Ascending aorta (tissue), 2 donors: ENCODE measurements at regions of chr1 and their contacts with region 1.

Region 1: GRCh38 chr1:245153081-245153551 is 1.7 kb upstream of the KIF26B start:
- DNase-seq: no peak
- H3K4me3 ChIP-seq: peak overlapping the region; percentile 70 to 71
- H3K27ac ChIP-seq: no peak overlapping the region
- H3K4me1 ChIP-seq: peaks cover 8 to 22% of the 10 kb centered on the region in 2 donors
- H3K27me3 ChIP-seq: peaks cover 9% of the 10 kb centered on the region
- CTCF ChIP-seq: peak; percentile 8 to 62 (median 49)

Region 2: GRCh38 chr1:245110406-245110805 is 42.7 kb before region 1 on chr1:
- intact Hi-C with region 1: no loop called
- DNase-seq: no peak
- H3K4me3 ChIP-seq: no peak overlapping the region
- H3K27ac ChIP-seq: no peak overlapping the region
- H3K4me1 ChIP-seq: no peaks in the 10 kb centered on the region
- H3K27me3 ChIP-seq: no peaks in the 10 kb centered on the region
- CTCF ChIP-seq: no peak

Region 3: GRCh38 chr1:246005067-246005466 is 852.0 kb after region 1 on chr1:
- intact Hi-C with region 1: loop called (anchors 5 kb)
- DNase-seq: no peak
- H3K4me3 ChIP-seq: no peak overlapping the region
- H3K27ac ChIP-seq: no peak overlapping the region
- H3K4me1 ChIP-seq: no peaks in the 10 kb centered on the region
- H3K27me3 ChIP-seq: no peaks in the 10 kb centered on the region
- CTCF ChIP-seq: no peak